ENCODE measurements at regions of chr7 and their contacts with region 1.

Region 1: DNA sequence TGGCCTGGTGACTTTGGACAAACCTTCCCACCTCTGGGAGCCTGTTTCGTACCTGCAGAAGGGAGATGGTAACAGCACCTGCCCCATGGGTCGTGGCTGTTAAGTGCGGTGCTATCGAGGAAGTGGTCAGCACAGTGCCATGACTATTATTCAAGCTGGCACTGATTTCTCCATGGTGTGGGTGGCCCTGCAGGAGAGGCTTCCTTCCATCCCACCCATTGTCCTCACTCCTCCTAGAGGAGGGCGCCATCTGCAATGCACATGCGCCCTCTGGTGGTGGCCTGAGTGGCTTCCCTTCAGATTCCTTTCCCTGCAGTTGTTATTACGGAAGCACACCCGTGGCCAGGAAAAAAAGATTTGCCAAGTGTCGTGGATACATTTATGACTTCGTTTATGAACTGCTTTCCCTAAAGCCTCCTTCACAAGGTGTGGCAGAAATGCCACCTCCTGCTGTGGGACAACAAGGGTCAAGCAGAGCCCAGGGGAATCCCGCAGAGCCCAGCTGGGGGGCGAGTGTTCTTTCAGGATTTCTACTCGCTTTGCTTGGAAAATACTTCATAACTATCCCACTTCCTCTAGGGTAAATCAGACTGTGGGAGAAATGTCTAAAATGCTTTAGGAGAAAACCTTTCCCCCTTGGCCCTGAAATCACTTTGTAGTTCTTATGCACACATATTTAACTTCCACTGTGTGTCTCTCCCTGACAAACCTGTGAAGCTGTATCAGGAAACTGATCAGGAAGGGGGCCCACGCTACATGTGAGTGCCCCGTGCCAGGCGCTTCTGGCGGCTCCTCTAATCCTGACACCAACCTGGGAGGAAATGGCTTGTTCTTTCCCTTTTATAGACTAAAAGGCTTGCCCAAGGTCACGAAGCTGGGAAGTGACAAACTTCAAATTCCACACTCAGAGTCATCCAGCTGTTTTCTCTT is 98.0 kb upstream of the ANLN start:
- DNase-seq: peak; percentile 77
- H3K4me3 ChIP-seq: peak overlapping the region; percentile 35
- H3K27ac ChIP-seq: no peak overlapping the region
- H3K4me1 ChIP-seq: peaks cover 30% of the 10 kb centered on the region
- CTCF ChIP-seq: peak; percentile 96

Region 2: DNA sequence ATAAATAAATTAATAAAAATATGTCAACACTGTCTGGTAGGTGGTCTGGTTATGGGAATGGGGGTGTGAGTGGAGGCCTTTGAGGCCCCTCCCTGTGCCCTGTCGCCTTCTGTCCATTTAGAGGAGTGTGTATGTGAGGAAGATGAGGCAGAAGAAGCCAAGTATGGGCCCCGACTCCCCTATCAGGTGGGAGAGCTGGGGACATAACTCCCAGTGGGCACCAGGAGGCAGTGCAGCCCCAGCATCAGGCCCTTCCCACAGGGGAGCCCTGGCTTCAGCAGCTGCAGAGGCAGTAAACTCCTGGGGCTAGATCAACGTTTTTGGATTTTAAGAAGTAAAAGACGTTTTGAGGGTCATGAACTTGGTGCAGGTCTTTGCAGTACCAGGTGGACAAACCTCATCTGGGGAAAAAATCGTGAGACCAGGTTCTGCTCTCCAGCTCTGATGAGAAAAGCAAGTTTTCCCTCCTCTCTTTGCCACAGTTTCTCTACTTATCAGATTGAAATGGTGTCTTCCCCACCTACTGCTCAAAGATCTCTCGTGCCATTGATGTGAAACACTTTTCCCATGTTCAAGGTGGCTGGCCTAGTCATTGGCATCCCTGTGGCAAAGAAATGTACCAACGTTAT is 306.4 kb before region 1 on chr7:
- CTCF ChIA-PET with region 1: no interaction called
- POLR2A ChIA-PET with region 1: no interaction called
- intact Hi-C with region 1: loop called (anchors 1 kb)
- DNase-seq: peak; percentile 76
- H3K4me3 ChIP-seq: no peak overlapping the region
- H3K27ac ChIP-seq: no peak overlapping the region
- H3K4me1 ChIP-seq: no peaks in the 10 kb centered on the region
- CTCF ChIP-seq: peak; percentile 93

Region 3: GRCh38 chr7:36128448-36129047 is 163.1 kb before region 1 on chr7:
- CTCF ChIA-PET with region 1: interaction called, 7 read pairs
- POLR2A ChIA-PET with region 1: no interaction called
- intact Hi-C with region 1: loop called (anchors 1 kb)
- DNase-seq: peak; percentile 11
- H3K4me3 ChIP-seq: no peak overlapping the region
- H3K27ac ChIP-seq: no peak overlapping the region
- H3K4me1 ChIP-seq: no peaks in the 10 kb centered on the region
- CTCF ChIP-seq: peak; percentile 84

Region 4: GRCh38 chr7:36192053-36192824 is 99.4 kb before region 1 on chr7:
- CTCF ChIA-PET with region 1: interaction called, 5 read pairs
- POLR2A ChIA-PET with region 1: interaction called, 24 read pairs
- intact Hi-C with region 1: loop called (anchors 1 kb)
- DNase-seq: peak; percentile 65
- H3K4me3 ChIP-seq: peak overlapping the region; percentile 56
- H3K27ac ChIP-seq: peak overlapping the region; percentile 96
- H3K4me1 ChIP-seq: peaks cover 73% of the 10 kb centered on the region
- CTCF ChIP-seq: 0 out of 2 replicates have a peak, but pooled peaks have one; percentile 29

Region 5: DNA sequence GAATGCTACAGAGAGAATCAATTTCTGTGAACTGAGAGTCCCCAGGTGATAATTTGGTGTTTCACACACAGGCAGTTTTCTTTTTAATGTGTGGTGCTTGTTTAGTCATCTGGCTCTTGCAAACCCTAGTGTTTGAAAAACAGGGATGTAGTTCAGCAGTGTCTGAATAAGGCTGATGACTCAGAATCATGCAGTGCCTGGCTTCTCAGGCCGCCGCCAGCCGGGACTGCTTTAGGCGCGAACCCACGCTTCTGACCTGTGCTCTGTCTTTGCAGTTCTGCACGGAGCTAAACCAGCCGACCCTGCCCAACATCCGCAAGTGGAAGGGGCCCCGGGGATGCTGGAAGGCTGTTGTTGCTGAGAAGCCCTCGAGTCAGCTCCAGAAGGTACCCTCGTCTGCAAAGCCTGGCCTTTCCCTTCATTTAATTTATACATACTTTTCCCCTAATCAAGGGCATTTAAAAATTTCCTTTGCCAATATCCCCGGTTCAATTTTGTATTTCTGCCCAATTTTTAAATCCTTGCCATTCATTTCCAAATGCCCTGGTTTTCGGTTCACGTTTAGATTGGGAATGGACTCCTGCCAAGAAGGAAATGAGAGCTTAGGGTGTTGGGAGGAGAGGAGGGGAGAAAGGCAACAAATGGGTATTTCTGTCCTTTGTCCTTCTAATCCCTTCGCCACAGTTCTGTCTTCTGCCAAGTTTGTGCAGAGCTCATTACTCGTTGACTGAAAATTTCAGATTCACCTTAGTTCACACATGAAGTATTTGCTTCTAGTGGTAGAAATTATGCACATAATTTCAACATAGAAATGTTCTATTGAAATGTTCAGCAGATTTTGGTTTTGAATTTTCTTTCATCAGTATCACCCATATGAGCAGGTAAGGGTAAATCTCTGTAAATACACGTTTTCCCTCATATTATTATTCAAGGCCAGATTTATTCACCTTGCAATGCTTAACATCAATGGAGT is 10.5 kb before region 1 on chr7:
- CTCF ChIA-PET with region 1: no interaction called
- POLR2A ChIA-PET with region 1: interaction called, 13 read pairs
- intact Hi-C with region 1: no loop called
- DNase-seq: no peak
- H3K4me3 ChIP-seq: no peak overlapping the region
- H3K27ac ChIP-seq: no peak overlapping the region
- H3K4me1 ChIP-seq: peaks cover 50% of the 10 kb centered on the region
- CTCF ChIP-seq: no peak

Region 6: DNA sequence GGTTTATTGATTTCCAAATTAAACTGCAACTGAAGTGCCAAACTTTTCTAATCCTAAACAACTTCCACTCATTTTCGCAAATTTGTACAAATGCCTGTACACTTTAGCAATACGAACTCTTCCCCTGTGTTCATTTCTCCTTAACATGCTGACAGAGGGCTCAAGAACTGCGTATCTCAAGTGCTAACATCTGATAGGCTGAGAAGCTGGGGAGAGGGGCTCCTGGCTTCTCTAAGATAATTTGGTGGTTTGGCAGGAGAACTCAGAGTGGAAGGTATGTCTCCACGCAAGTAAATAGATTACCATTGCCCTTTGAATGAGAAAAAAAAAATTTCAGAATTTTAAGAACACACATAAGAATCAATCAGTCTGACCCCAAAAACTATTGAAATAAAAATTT is 44.7 kb after region 1 on chr7:
- CTCF ChIA-PET with region 1: no interaction called
- POLR2A ChIA-PET with region 1: no interaction called
- intact Hi-C with region 1: no loop called
- DNase-seq: no peak
- H3K4me3 ChIP-seq: no peak overlapping the region
- H3K27ac ChIP-seq: no peak overlapping the region
- H3K4me1 ChIP-seq: no peaks in the 10 kb centered on the region
- CTCF ChIP-seq: no peak

Measured in OCI-LY7 (cell line).